PC-3 (cell line): ENCODE measurements at regions of chr11 and their contacts with region 1.

Region 1: DNA sequence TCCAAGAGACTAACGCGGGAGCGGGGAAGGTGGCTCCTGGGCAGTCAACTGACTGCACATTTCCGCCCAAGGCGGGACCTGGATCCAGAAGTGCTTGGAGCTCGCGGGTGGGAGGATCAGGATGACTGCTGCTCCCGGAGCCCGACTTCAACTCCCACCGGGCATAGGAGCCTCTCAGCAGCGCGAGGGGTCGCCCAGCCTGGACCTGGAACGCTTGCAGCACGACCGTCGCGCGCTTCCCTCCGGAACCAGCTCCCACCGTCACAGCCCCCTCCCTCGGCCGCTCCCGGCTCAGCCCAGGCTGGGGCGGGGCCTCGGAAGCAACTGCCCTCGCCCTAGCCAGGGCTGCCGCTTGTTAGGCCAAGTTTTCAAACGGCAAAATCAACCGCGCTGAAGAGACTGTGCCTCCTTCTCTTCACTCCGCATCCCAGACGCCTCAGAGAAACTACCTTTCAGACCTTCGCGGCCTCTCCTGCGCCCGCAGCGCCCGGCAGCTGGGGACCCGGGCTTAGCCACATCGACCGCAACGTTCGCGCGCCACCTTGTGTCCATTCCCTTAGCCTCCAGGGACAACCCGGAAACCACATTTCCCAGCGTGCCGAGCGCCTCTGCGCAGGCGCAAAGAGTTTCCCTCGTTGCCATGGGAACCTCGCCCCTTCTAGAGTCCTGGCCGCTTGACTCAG is 14.0 kb downstream of the SSH3 start:
- DNase-seq: peak; percentile 100
- ATAC-seq: peak; percentile 76
- H3K4me3 ChIP-seq: peak overlapping the region; percentile 75
- H3K27ac ChIP-seq: peak overlapping the region; percentile 78
- H3K4me1 ChIP-seq: peaks cover 25% of the 10 kb centered on the region
- H3K27me3 ChIP-seq: no peaks in the 10 kb centered on the region
- CTCF ChIP-seq: peak; percentile 96

Region 2: GRCh38 chr11:67082035-67082791 is 235.1 kb before region 1 on chr11:
- CTCF ChIA-PET with region 1: interaction called, 3 read pairs
- POLR2A ChIA-PET with region 1: no interaction called
- intact Hi-C with region 1: loop called (anchors 5 kb)
- DNase-seq: no peak
- ATAC-seq: no peak
- H3K4me3 ChIP-seq: no peak overlapping the region
- H3K27ac ChIP-seq: no peak overlapping the region
- H3K4me1 ChIP-seq: peaks cover 19% of the 10 kb centered on the region
- H3K27me3 ChIP-seq: no peaks in the 10 kb centered on the region
- CTCF ChIP-seq: no peak

Region 3: DNA sequence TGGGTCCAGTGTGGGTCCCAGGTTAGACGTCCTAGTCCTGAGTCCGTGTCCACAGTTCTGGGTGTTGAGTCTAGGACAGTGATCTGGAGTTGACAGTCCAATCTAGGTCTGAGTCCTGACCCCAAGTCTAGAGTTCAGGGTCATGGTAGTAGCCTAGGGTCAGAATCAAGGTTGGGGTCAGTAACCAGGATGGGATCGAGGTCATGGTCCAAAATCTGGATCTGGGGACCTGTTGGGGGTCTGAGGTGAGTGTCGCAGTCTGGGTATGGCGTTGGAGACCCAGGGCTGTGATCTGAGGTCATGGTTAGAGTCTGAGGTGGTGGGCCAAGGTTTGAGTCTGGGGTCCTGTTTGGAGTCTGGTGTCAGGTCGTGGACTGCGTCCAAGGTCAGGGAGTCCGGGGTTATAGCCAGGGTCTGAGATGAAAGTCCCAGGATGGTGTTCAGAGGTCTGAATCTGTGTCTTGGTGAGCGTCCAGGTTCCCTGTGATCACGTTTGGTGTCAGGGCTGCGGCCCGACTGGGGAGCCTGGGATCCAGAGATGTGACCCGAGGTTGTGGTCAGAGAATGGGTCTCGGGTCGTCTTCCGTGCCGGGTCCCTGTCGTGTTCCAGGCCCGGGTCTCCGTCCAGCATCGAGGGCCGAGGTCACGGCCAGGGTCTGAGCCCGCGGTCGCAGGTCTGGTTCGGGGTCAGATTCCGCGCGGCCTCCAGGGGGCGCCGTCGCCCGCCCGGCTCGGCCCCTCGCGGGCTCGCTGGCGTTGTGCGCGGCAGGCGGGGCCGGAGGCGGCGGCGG is 51.5 kb before region 1 on chr11:
- CTCF ChIA-PET with region 1: interaction called, 25 read pairs
- POLR2A ChIA-PET with region 1: interaction called, 5 read pairs
- intact Hi-C with region 1: loop called (anchors 1 kb)
- DNase-seq: peak; percentile 77
- ATAC-seq: peak; percentile 39
- H3K4me3 ChIP-seq: peak overlapping the region; percentile 57
- H3K27ac ChIP-seq: no peak overlapping the region
- H3K4me1 ChIP-seq: peaks cover 49% of the 10 kb centered on the region
- H3K27me3 ChIP-seq: no peaks in the 10 kb centered on the region
- CTCF ChIP-seq: peak; percentile 68

Region 4: DNA sequence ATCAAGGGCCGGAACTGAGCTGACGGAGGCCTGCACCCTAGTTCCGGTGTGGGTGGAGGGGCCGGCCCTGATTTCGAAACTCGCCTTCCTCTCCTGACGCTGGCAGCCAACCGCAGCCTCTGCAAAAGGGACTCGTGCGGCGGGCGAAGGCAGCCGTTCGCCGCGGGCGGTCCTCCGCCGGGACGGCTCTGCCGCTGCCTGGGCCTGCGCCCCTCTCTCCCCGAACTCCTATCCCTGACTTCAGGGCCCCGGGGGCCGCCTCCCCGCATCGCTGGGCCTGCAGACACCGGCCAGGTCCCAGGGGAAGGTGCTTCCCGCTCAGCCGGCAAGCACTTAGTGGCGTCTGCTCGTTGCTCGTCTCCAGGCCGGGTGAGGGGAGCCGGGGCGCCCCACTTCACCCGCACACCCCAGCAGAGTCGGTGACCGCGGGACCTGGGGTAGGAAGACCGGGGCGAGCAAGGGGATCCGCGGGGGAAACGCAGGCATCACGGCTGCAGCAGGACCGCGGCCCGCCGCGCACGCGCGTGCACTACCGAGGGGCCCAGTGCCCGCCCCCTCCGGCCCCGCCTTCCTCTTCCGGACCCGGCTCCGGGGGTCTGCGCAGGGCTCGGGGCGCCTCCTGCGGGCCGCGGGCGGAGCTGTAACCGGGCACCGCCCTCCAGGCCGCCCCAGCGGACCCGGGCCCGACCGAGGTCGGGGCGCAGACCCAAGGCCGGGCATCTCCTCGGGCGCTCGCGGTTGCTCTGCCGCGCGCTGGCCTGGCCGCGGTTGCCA is 28.7 kb before region 1 on chr11:
- CTCF ChIA-PET with region 1: no interaction called
- POLR2A ChIA-PET with region 1: no interaction called
- intact Hi-C with region 1: loop called (anchors 1 kb)
- DNase-seq: peak; percentile 85
- ATAC-seq: peak; percentile 63
- H3K4me3 ChIP-seq: peak overlapping the region; percentile 83
- H3K27ac ChIP-seq: peak overlapping the region; percentile 89
- H3K4me1 ChIP-seq: peaks cover 39% of the 10 kb centered on the region
- H3K27me3 ChIP-seq: no peaks in the 10 kb centered on the region
- CTCF ChIP-seq: 0 out of 2 replicates have a peak, but pooled peaks have one; percentile 15

Region 5: DNA sequence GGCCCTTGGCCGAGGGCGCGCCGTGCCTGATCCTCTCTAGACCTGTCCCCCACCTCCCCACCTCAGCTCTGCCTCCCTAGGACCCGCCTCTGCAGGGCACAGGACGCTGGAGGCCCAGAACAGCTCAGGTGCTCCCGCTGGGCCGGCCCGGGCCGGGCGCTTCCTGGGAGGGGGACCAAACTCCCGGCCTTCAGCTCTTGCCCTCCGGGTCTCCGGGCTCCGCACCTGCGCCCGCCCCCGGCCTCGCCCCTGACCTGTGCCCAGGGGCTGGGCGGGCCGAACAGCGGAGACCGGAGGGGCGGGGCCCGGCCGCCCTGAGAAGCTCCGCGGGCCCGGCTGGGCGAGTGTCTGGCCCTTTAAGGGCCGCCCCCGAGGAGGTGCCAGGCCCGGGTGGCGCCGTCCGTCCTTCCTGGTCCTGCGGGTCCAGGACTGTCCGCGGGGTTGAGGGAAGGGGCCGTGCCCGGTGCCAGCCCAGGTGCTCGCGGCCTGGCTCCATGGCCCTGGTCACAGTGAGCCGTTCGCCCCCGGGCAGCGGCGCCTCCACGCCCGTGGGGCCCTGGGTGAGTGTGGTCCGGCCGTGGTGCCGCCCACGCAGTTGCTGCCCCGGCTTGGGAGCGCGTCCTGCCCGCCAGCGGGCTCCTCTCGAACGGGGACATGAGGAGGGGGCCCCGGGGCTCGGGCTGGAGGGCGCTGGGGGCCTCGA is 14.1 kb before region 1 on chr11 and contains the start of gene SSH3:
- CTCF ChIA-PET with region 1: interaction called, 14 read pairs
- POLR2A ChIA-PET with region 1: interaction called, 5 read pairs
- intact Hi-C with region 1: loop called (anchors 1 kb)
- DNase-seq: peak; percentile 88
- ATAC-seq: peak; percentile 82
- H3K4me3 ChIP-seq: peak within 1 kb of the TSS; percentile 93
- H3K27ac ChIP-seq: peak within 1 kb of the TSS; percentile 55
- H3K4me1 ChIP-seq: peaks cover 18% of the 10 kb centered on the region
- H3K27me3 ChIP-seq: no peaks in the 10 kb centered on the region
- CTCF ChIP-seq: no peak
- total RNA-seq, gene SSH3: 35.1 and 52.4 TPM in 2 replicates

Region 6: GRCh38 chr11:67332081-67332691 is 14.8 kb after region 1 on chr11:
- CTCF ChIA-PET with region 1: no interaction called
- POLR2A ChIA-PET with region 1: no interaction called
- intact Hi-C with region 1: no loop called
- DNase-seq: no peak
- ATAC-seq: no peak
- H3K4me3 ChIP-seq: no peak overlapping the region
- H3K27ac ChIP-seq: no peak overlapping the region
- H3K4me1 ChIP-seq: no peaks in the 10 kb centered on the region
- H3K27me3 ChIP-seq: no peaks in the 10 kb centered on the region
- CTCF ChIP-seq: no peak

Region 7: GRCh38 chr11:67345920-67346799 is 28.8 kb after region 1 on chr11:
- CTCF ChIA-PET with region 1: interaction called, 12 read pairs
- POLR2A ChIA-PET with region 1: no interaction called
- intact Hi-C with region 1: loop called (anchors 1 kb)
- DNase-seq: peak; percentile 99
- ATAC-seq: peak; percentile 92
- H3K4me3 ChIP-seq: peak overlapping the region; percentile 26; the same call in 1 of the 2 replicates
- H3K27ac ChIP-seq: peak overlapping the region; percentile 95
- H3K4me1 ChIP-seq: peaks cover 38% of the 10 kb centered on the region
- H3K27me3 ChIP-seq: no peaks in the 10 kb centered on the region
- CTCF ChIP-seq: peak; percentile 99